Heart right ventricle (tissue), 16 donors: ENCODE measurements at regions of chr20 and their contacts with region 1.

Region 1: GRCh38 chr20:31849455-31849925 is 4.1 kb upstream of the FOXS1 start:
- DNase-seq: no peak
- ATAC-seq: no peak
- H3K4me3 ChIP-seq: no peak overlapping the region
- H3K27ac ChIP-seq: no peak overlapping the region
- H3K4me1 ChIP-seq: peaks cover 0 to 18% (median 0%) of the 10 kb centered on the region in 9 donors
- H3K27me3 ChIP-seq: peaks cover 0 to 52% (median 39%) of the 10 kb centered on the region in 7 donors
- CTCF ChIP-seq: no peak

Region 2: GRCh38 chr20:31951530-31952453 is 102.3 kb after region 1 on chr20 and contains the start of gene PDRG1:
- intact Hi-C with region 1: loop called in 8 of 10 experiments (anchors 1 to 5 kb)
- DNase-seq: peak; percentile 94 to 97
- ATAC-seq: peak; percentile 97 to 99 (median 99)
- H3K4me3 ChIP-seq: peak within 1 kb of the TSS; percentile 67 to 98 (median 90)
- H3K27ac ChIP-seq: peak within 1 kb of the TSS in 9 of 10 donors; percentile 50 to 90 (median 86)
- H3K4me1 ChIP-seq: peaks cover 8 to 18% (median 15%) of the 10 kb centered on the region in 9 donors
- H3K27me3 ChIP-seq: peaks cover 0 to 11% (median 0%) of the 10 kb centered on the region in 7 donors
- CTCF ChIP-seq: peak; percentile 80 to 99 (median 96)
- total RNA-seq, gene PDRG1: 6.4 to 10.7 (median 7.5) TPM

Region 3: DNA sequence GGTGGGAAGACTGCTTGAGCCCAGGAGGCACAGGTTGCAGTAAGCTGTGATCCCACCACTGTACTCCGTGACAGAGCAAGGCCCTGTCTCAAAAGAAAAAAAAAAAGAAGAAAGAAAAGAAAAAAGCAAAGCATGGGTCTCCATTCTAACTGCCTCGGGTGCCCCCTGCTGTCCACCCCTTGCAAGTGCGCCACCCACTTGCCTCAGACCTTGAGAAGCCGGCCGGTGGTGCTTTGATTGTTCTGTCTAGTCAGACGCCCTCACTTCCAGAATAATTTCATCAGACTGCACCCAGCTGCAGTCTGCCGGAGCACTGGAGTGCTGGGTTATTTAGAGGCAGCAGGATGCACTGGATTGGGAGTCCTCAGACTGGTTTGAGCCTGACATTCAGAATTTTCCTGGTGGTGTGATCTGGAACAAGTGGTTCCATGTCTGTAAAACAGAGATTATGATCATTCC is 242.4 kb after region 1 on chr20:
- intact Hi-C with region 1: loop called in 7 of 10 experiments (anchors 5 to 10 kb)
- DNase-seq: peak; percentile 66 to 68
- ATAC-seq: peak in 6 of 8 donors; percentile 28 to 85 (median 76)
- H3K4me3 ChIP-seq: no peak overlapping the region
- H3K27ac ChIP-seq: no peak overlapping the region
- H3K4me1 ChIP-seq: peaks cover 0 to 6% (median 0%) of the 10 kb centered on the region in 9 donors
- H3K27me3 ChIP-seq: peaks cover 0 to 10% (median 0%) of the 10 kb centered on the region in 7 donors
- CTCF ChIP-seq: peak; percentile 76 to 98 (median 92)